Gastrocnemius medialis (tissue), 4 donors: ENCODE measurements at regions of chr6 and their contacts with region 1.

Region 1: GRCh38 chr6:36360241-36361054 is 23.8 kb upstream of the BNIP5 start:
- DNase-seq: peak; percentile 56
- ATAC-seq: peak; percentile 69 to 86
- H3K4me3 ChIP-seq: no peak overlapping the region
- H3K27ac ChIP-seq: peak overlapping the region in 3 of 4 donors; percentile 3 to 59 (median 55)
- H3K4me1 ChIP-seq: peaks cover 8 to 10% of the 10 kb centered on the region in 2 donors
- H3K27me3 ChIP-seq: no peaks in the 10 kb centered on the region
- CTCF ChIP-seq: peak; percentile 70 to 84 (median 82)
- POLR2A ChIP-seq: no peak

Region 2: DNA sequence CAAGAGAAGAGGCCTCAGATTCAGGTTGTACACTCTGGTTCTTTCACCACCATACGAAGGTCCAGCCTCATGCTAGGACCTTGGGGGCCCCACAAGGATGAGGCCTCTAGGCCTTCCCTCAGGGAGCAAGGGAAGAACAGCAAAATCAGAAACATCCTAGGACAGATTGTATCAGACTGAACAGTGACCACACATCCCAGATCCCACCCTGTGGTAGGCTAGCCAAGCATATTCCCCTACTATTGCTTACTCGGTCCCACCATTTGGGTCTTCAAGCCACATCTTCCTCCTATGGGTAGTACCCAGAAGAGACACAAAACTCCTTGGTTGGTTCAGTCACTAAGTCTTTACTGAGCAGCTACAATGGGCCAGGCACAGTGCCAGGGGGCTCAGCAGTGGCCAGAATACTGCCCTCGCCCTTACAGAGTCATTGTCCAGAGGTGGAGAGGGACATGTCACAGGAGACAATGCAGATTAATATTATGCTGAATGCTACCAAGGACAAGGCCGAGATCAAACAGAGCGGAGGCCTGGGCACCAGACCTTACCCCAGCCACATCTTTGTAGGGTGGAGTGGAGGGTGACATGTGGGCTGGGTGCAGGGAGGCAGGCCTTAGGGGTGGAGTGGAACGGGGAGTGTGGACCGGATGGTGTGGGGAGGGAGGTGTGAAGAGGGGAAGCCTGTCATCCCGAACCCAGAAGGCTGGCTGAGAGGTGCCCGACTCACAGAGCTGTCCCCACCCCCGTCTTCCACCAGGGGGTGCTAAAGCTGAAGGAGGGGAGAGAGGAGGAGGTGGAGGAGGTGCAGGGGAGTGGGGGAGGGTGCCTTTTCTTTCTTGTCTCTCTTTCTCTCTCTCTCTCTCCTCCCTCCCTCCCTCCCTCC is 236.9 kb before region 1 on chr6:
- in situ Hi-C with region 1: loop called in 1 of 4 experiments (anchors 25 kb)
- intact Hi-C with region 1: loop called (anchors 10 kb)
- DNase-seq: peak; percentile 61 to 77
- ATAC-seq: peak; percentile 65 to 87
- H3K4me3 ChIP-seq: peak overlapping the region in 1 of 4 donors; percentile 11
- H3K27ac ChIP-seq: no peak overlapping the region
- H3K4me1 ChIP-seq: peaks cover 4 to 23% of the 10 kb centered on the region in 2 donors
- H3K27me3 ChIP-seq: peaks cover 0 to 3% (median 0%) of the 10 kb centered on the region in 3 donors
- CTCF ChIP-seq: peak; percentile 45 to 82 (median 77)
- POLR2A ChIP-seq: no peak

Region 3: DNA sequence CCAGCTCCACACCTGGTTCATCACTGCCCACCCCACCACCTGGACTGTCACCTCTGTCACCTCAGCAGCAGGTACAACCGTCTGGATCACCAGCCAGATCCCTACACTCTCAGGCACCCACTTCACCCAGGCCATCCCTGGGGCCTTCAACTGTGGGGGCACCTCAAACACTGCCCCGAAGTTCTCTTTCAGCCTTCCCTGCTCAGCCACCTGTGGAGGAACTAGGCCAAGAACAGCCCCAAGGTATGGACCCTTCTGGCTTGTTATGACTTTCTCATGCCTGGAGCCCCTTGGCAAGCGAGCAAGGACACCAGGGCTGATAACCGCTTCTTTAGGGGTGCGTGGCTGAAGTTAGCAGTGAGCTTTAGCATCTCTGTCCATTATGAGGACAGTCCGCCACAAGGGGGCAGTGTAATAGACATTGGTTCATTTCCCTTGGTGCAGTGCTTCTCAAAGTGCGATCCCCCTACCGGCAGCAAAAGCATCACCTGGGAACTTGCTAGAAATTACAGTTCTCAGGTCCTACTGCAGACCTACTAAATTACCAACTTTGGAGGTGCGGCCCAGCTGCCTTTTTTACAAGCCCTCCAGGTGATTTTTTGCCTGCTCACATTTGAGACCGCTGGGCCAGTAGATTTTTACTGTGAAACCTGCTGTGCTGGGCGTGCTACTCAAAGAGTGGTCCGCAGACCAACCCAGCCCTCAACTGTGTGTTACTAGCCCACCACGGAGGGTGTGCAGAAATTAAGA is 58.0 kb before region 1 on chr6:
- in situ Hi-C with region 1: loop called in 1 of 4 experiments (anchors 10 kb)
- intact Hi-C with region 1: loop called (anchors 1 kb)
- DNase-seq: peak; percentile 54 to 72
- ATAC-seq: peak; percentile 78 to 89
- H3K4me3 ChIP-seq: no peak overlapping the region
- H3K27ac ChIP-seq: no peak overlapping the region
- H3K4me1 ChIP-seq: no peaks in the 10 kb centered on the region
- H3K27me3 ChIP-seq: peaks cover 0 to 13% (median 0%) of the 10 kb centered on the region in 3 donors
- CTCF ChIP-seq: peak; percentile 67 to 87 (median 74)
- POLR2A ChIP-seq: no peak

Region 4: DNA sequence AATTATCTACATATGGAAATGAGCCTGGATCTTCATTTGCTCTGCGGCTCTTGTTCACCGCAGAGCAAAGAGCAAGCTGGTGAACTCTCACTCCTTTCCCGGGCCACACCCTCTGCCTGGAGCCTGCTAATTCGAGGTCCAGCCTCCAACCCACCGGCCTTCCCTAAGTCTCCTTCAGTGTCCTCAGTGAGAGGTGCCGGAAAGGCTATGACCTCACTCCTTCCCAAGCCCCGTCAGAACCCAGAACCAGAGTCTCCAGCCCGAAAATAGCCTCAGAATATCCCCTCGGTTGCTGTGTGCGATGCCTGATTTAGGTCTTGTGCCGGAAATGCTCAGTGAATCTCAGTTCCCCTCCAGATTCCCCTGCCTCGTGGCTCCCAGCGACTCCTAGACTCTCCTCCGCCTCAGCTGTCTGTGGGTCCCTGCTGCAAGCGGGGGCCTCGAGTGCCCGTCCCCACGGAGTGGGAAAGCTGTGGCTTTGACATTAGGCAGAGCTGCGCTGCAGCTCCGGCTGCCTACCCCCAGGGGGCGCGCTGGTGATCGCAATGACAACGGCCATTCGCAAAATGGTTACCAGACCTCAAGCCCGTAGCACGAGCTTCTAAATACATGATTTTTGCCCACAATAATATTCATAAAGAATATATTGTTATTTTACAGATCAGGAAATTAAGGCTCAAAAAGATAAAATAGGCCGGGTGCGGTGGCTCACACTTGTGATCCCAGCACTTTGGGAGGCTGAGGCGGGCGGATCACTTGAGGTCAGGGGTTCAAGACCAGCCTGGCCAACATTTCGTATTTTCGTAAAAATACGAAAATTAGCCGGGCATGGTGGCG is 19.6 kb before region 1 on chr6:
- in situ Hi-C with region 1: no loop called
- intact Hi-C with region 1: loop called (anchors 2 kb)
- DNase-seq: peak in 1 of 2 donors; percentile 50
- ATAC-seq: peak; percentile 72 to 82
- H3K4me3 ChIP-seq: peak overlapping the region in 1 of 4 donors; percentile 0
- H3K27ac ChIP-seq: peak overlapping the region in 1 of 4 donors; percentile 32
- H3K4me1 ChIP-seq: peaks cover 0 to 4% of the 10 kb centered on the region in 2 donors
- H3K27me3 ChIP-seq: peaks cover 0 to 21% (median 18%) of the 10 kb centered on the region in 3 donors
- CTCF ChIP-seq: peak; percentile 81 to 93 (median 89)
- POLR2A ChIP-seq: no peak

Region 5: GRCh38 chr6:36678518-36679027 is 318.1 kb after region 1 on chr6 and contains the start of gene CDKN1A:
- in situ Hi-C with region 1: no loop called
- intact Hi-C with region 1: no loop called
- DNase-seq: peak; percentile 86 to 94
- ATAC-seq: peak; percentile 38 to 61
- H3K4me3 ChIP-seq: peak within 1 kb of the TSS; percentile 91 to 97 (median 93)
- H3K27ac ChIP-seq: peak within 1 kb of the TSS; percentile 99 to 100 (median 100)
- H3K4me1 ChIP-seq: peaks cover 26 to 37% of the 10 kb centered on the region in 2 donors
- H3K27me3 ChIP-seq: no peaks in the 10 kb centered on the region
- CTCF ChIP-seq: peak in 3 of 5 experiments; percentile 21 to 45 (median 28)
- POLR2A ChIP-seq: peak; percentile 99 to 100
- total RNA-seq, gene CDKN1A: 110 to 346 (median 260) TPM